ENCODE measurements at regions of chr22 and their contacts with region 1.

Region 1: DNA sequence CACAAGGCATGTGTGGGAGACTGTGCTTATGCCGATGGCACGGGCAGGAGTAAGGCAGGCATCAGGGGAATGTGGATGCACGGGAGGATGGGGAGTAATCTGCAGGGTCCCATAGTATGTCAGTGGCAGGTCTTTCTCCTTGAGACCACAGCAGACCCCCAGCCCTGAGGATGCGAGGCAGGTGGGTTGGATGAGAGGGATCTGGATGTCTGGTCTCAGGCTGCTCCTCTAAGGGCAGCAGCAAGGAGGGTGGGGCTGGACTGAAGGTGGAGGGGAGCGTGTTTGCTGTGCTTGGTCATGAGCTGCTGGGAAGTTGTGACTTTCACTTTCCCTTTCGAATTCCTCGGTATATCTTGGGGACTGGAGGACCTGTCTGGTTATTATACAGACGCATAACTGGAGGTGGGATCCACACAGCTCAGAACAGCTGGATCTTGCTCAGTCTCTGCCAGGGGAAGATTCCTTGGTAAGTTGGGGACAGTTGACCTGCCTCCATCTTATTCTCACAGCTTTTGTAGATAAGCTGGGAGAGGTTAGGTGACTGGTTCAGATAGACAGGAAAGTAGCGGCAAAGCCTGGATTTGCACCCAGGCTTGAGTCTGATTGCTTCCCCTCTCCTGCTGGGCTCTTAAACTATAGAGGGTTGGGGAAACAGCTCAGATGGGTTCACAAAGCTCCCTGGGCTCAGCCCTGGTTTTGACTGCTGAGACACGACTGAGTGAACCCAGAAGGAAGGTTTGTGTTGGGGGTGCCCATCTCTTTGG is at the start of gene APOL1:
- DNase-seq: peak; percentile 76
- ATAC-seq: peak; percentile 96
- H3K4me3 Mint-ChIP-seq: peak within 1 kb of the TSS; percentile 95
- H3K27ac Mint-ChIP-seq: peak within 1 kb of the TSS; percentile 92
- H3K4me1 Mint-ChIP-seq: peaks cover 59% of the 10 kb centered on the region
- H3K27me3 Mint-ChIP-seq: no peaks in the 10 kb centered on the region
- total RNA-seq, gene APOL1: 37.4 to 38.2 TPM

Region 2: DNA sequence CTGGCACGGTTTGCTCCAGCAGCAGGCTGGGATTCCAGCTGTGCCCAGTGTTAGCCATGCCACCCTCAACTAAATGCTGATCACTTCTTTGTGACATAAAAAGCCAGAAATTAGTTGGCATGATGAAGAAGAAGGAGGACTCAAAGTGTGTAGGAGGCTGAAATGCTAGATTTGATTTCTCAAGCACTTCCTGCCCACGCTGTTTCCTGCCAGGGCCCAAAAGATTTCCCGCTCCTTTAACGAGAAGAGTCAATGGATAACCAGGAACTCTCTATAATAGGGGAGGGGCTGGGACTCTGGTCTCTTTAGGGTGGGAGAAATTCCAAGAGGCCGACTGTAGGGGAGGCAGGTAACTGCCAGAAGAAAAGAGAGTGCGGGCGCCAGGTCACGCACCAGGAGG is 118.8 kb before region 1 on chr22:
- CTCF ChIA-PET with region 1: no interaction called
- POLR2A ChIA-PET with region 1: no interaction called
- DNase-seq: no peak
- ATAC-seq: no peak
- H3K4me3 Mint-ChIP-seq: no peak overlapping the region
- H3K27ac Mint-ChIP-seq: no peak overlapping the region
- H3K4me1 Mint-ChIP-seq: peaks cover 8% of the 10 kb centered on the region
- H3K27me3 Mint-ChIP-seq: peaks cover 6% of the 10 kb centered on the region

Region 3: DNA sequence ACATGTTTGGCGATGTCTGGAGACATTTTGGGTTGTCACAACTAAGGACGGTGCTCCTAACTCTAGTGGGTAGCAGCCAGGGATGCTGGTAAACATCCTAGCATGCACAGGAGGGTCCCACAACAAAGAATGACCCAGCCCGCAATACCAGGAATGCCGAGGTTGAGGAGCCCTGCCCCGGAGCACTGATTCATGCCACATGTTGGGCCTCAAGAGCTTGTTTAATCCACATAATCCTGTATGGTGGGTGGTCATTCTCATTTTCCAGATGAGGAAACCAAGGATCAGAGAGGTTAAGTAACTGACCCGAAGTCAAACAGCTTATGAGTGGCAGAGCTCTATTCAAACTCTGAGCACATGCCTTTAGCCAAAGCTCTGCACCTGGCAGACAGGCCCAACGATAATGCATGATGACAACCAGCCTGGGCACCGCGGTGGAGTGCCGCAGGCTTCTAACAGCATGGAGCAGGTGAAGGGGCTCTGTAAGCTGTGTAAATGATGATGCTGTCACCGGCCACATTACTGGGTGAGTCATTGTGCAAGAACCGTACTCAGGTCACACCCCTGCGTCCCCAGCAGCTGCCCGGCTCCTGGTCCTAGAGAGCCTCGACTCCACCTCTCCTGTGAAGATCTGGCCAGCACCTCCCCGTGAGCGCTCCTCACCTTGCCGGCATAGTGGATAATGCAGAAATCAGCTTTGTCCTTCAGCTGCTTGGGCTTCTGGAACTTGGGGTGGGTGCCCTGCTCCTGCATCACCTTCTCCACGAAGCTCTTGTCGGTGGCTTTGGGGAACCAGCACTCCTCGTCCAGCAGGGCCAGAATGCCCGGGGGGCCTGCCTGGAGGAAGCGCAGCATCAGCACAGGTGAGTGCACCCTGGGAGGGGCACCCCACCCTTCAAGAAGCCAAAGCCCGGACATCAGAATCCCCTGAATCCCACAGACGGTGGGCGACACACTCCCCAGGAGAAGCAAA is 58.7 kb after region 1 on chr22:
- CTCF ChIA-PET with region 1: no interaction called
- POLR2A ChIA-PET with region 1: no interaction called
- DNase-seq: no peak
- ATAC-seq: no peak
- H3K4me3 Mint-ChIP-seq: no peak overlapping the region
- H3K27ac Mint-ChIP-seq: peak overlapping the region; percentile 43
- H3K4me1 Mint-ChIP-seq: peaks cover 5% of the 10 kb centered on the region
- H3K27me3 Mint-ChIP-seq: no peaks in the 10 kb centered on the region

Region 4: DNA sequence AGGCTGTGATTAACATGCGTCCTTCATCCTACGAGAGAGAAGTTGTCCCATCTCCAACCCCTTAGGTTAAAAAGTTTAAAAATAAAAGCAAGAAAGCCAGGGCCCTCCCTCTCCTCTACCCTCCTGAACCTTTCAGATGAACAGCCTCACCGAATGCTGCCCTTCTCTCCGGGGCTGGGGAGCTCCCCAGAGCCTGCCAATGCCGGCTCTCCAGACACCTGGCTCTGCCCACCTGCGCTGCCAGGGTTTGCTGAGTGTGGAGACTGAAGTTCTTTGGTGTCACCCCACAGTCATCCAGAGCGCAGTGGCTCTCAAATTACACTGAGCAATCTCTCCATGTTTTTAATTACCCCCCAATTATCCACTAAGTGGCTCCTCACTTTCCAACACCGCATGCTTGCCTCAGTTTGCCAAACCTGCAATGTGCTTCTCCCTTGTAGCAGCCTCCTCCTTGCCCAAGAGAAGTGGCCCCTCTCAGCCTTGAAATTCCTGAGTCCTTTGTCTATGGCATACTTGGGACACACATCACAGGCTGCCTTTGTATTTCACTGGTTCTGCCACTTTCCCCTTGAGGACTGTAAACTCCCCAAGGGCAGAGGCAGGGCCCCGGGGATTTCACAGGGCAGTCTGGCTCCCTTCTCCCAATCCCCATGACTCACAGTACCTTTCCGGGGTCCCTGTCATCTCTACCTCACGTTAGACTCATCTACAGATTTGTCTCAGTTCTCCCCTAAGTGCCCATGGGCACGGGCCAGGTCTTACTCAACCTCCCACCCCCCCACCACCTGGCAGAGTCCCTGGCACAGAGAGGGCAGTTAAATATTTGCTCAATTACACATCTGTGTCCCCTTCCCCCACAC is 132.8 kb after region 1 on chr22:
- CTCF ChIA-PET with region 1: no interaction called
- POLR2A ChIA-PET with region 1: no interaction called
- DNase-seq: peak; percentile 48
- ATAC-seq: no peak
- H3K4me3 Mint-ChIP-seq: peak overlapping the region; percentile 88
- H3K27ac Mint-ChIP-seq: peak overlapping the region; percentile 92
- H3K4me1 Mint-ChIP-seq: peaks cover 63% of the 10 kb centered on the region
- H3K27me3 Mint-ChIP-seq: no peaks in the 10 kb centered on the region

Region 5: GRCh38 chr22:36486619-36487384 is 233.9 kb after region 1 on chr22:
- CTCF ChIA-PET with region 1: interaction called, 13 read pairs
- POLR2A ChIA-PET with region 1: no interaction called
- DNase-seq: peak; percentile 72
- ATAC-seq: no peak
- H3K4me3 Mint-ChIP-seq: no peak overlapping the region
- H3K27ac Mint-ChIP-seq: no peak overlapping the region
- H3K4me1 Mint-ChIP-seq: peaks cover 8% of the 10 kb centered on the region
- H3K27me3 Mint-ChIP-seq: no peaks in the 10 kb centered on the region